ENCODE measurements at regions of chr2 and their contacts with region 1.

Region 1: DNA sequence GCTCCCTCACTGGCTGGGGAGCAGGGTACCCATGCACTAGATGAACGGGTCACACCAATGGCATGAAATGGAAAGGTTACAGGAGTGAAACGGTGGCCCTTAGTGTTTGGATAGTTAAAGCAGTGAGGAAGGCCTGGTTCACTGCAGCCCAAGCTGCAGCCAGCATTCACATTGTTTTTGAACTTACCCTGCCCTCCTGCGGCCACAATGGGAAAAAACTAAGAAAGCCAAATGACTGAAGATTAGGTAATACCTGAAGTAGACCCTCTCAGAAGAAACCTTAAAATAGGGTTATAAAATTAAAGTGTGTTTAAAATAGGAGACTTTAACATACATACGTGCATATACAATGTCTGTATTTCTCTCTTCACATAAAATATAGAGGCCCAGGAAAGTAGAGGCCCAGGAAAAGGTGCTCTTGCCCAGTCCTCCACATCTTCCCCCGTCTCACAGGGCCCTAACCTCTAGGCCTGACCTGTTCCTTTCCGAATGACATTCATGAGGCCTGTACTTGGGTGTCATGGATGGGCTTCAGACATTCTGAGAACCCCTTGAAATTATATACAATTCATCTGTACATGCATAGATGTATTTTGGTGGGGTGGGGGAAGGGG is 33.3 kb downstream of the DOK1 start:
- DNase-seq: peak; percentile 60 to 90
- H3K4me3 ChIP-seq: no peak overlapping the region
- CTCF ChIP-seq: no peak
- POLR2A ChIP-seq: no peak

Region 2: DNA sequence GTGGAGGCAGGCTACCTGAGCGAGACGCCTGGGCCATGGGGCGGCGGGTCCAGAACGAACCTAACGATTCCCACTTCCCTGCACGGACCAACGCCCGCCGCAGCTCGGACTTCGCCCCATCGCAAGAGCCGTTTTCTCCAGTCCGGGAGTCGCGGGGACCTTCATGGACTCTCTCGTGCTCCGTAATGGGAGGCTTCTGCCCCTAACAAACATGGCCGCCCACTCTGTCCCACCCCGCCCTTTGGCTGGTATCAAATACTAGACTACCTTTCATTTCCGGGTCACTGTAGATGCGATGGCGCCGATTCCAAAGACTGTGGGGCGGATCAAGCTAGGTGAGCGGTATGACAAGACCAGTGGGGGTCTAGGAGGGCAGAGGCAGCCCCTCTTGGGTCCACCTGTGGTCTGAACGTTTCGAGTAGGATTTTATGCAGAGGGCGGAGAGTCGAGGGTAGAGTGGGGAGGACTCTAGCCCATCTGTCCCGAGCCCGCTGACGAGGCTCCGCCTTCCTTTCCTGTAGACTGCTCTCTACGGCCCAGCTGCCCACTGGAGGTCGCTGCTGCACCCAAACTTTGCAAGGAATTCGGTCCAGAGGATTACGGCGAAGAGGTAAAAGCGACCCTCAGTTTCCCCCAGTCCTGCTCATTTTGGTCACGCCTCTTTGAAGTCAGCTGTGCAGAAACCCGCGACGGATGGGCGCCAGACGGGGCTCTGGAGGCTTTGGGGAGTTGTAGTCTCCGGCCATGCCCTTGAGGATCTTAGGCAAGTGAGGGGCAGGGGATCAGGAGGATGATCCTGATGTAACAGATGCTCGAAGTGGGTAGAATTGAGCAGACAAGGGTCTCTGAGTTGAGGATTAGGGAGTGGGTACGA is 104.7 kb before region 1 on chr2 and contains the starts of genes CCDC142 and TTC31:
- intact Hi-C with region 1: loop called (anchors 5 kb)
- DNase-seq: peak; percentile 98 to 100
- H3K4me3 ChIP-seq: peak within 1 kb of the TSS; percentile 82
- CTCF ChIP-seq: peak in 1 of 3 donors; percentile 84
- POLR2A ChIP-seq: no peak
- total RNA-seq, gene CCDC142: 11.7 to 16.1 (median 13.4) TPM
- total RNA-seq, gene TTC31: 18.4 to 26.1 (median 21.9) TPM

Region 3: DNA sequence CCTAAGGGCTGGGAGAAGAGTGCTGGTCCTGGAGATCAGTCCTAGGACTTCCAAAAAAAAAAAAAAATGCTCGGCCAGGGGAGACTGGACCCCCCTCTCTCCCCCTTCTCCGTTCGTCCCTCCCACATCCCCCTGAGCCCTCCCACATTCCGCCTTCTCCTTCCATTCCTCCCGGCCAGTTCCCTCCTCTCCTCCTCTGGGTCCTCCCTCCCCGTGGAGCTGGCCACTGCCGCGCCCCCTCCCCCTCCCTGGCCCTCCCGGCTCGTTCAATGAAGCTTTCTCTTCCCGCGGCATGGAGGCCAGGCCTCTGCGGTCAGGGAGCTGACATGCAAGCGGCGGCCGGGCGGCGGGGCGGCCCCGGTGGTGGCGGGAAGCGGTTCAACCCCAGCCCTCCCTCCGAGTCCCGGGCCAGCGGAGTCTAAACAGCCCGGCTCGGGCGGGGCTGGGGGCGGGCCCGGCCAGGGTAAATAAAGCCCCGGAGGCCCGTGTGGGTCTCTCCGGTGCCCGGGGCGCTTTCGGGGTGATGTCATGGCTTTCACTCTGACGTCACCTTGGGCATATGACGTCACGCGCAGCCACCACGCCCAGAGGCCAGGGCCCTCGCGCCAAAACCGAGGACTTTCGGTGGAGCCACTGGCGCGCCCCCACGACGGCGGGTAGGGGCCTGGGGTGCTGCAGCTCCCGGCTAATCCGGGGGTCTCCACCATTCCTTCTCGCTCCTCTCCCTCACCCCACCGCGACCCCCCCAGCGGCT is 33.7 kb before region 1 on chr2 and contains the start of gene LOXL3:
- intact Hi-C with region 1: no loop called
- DNase-seq: peak; percentile 59 to 95
- H3K4me3 ChIP-seq: peak within 1 kb of the TSS; percentile 35
- CTCF ChIP-seq: no peak
- POLR2A ChIP-seq: no peak
- total RNA-seq, gene LOXL3: 0.17 to 2.5 (median 1.4) TPM

Measured in lower leg skin (tissue), 4 donors.